BJ (cell line): ENCODE measurements at regions of chr13 and their contacts with region 1.

Region 1: GRCh38 chr13:46721054-46721453 is 75.9 kb downstream of the ESD start:
- DNase-seq: no peak
- H3K4me3 ChIP-seq: no peak overlapping the region
- H3K27me3 ChIP-seq: no peaks in the 10 kb centered on the region
- CTCF ChIP-seq: peak; percentile 47

Region 2: GRCh38 chr13:46492946-46493345 is 228.1 kb before region 1 on chr13:
- CTCF ChIA-PET with region 1: interaction called, 23 read pairs
- POLR2A ChIA-PET with region 1: no interaction called
- DNase-seq: no peak
- H3K4me3 ChIP-seq: no peak overlapping the region
- H3K27me3 ChIP-seq: peaks cover 2% of the 10 kb centered on the region
- CTCF ChIP-seq: peak; percentile 62

Region 3: GRCh38 chr13:46553886-46554858 is 166.9 kb before region 1 on chr13:
- CTCF ChIA-PET with region 1: interaction called, 66 read pairs
- POLR2A ChIA-PET with region 1: no interaction called
- DNase-seq: no peak
- H3K4me3 ChIP-seq: peak overlapping the region; percentile 100
- H3K27me3 ChIP-seq: no peaks in the 10 kb centered on the region
- CTCF ChIP-seq: peak; percentile 41

Region 4: GRCh38 chr13:46648166-46648635 is 72.9 kb before region 1 on chr13:
- CTCF ChIA-PET with region 1: no interaction called
- POLR2A ChIA-PET with region 1: no interaction called
- DNase-seq: no peak
- H3K4me3 ChIP-seq: no peak overlapping the region
- H3K27me3 ChIP-seq: no peaks in the 10 kb centered on the region
- CTCF ChIP-seq: no peak

Region 5: GRCh38 chr13:46925486-46925885 is 204.4 kb after region 1 on chr13:
- CTCF ChIA-PET with region 1: no interaction called
- POLR2A ChIA-PET with region 1: no interaction called
- DNase-seq: no peak
- H3K4me3 ChIP-seq: no peak overlapping the region
- H3K27me3 ChIP-seq: no peaks in the 10 kb centered on the region
- CTCF ChIP-seq: no peak